CD8-positive, alpha-beta T cell (primary cell): ENCODE measurements at regions of chr19 and their contacts with region 1.

Region 1: GRCh38 chr19:38736413-38737280 is 7.6 kb downstream of the CAPN12 start:
- DNase-seq: peak; percentile 27 to 78 (median 67)
- ATAC-seq: peak; percentile 27
- H3K4me3 ChIP-seq: peak overlapping the region; percentile 29 to 41
- H3K4me3 Mint-ChIP-seq: peak overlapping the region; percentile 66
- H3K27ac ChIP-seq: no peak overlapping the region
- H3K27ac Mint-ChIP-seq: no peak overlapping the region
- H3K4me1 ChIP-seq: peaks cover 45% of the 10 kb centered on the region
- H3K4me1 Mint-ChIP-seq: peaks cover 40% of the 10 kb centered on the region
- H3K27me3 ChIP-seq: no peaks in the 10 kb centered on the region
- H3K27me3 Mint-ChIP-seq: no peaks in the 10 kb centered on the region
- CTCF ChIP-seq: no peak

Region 2: GRCh38 chr19:38856813-38857212 is 120.2 kb after region 1 on chr19:
- CTCF ChIA-PET with region 1: no interaction called
- POLR2A ChIA-PET with region 1: no interaction called
- intact Hi-C with region 1: no loop called
- DNase-seq: no peak
- ATAC-seq: no peak
- H3K4me3 ChIP-seq: no peak overlapping the region
- H3K4me3 Mint-ChIP-seq: peak overlapping the region; percentile 56
- H3K27ac ChIP-seq: peak overlapping the region; percentile 21 to 66
- H3K27ac Mint-ChIP-seq: peak overlapping the region; percentile 72
- H3K4me1 ChIP-seq: peaks cover 22% of the 10 kb centered on the region
- H3K4me1 Mint-ChIP-seq: peaks cover 30% of the 10 kb centered on the region
- H3K27me3 ChIP-seq: no peaks in the 10 kb centered on the region
- H3K27me3 Mint-ChIP-seq: no peaks in the 10 kb centered on the region
- CTCF ChIP-seq: no peak

Region 3: DNA sequence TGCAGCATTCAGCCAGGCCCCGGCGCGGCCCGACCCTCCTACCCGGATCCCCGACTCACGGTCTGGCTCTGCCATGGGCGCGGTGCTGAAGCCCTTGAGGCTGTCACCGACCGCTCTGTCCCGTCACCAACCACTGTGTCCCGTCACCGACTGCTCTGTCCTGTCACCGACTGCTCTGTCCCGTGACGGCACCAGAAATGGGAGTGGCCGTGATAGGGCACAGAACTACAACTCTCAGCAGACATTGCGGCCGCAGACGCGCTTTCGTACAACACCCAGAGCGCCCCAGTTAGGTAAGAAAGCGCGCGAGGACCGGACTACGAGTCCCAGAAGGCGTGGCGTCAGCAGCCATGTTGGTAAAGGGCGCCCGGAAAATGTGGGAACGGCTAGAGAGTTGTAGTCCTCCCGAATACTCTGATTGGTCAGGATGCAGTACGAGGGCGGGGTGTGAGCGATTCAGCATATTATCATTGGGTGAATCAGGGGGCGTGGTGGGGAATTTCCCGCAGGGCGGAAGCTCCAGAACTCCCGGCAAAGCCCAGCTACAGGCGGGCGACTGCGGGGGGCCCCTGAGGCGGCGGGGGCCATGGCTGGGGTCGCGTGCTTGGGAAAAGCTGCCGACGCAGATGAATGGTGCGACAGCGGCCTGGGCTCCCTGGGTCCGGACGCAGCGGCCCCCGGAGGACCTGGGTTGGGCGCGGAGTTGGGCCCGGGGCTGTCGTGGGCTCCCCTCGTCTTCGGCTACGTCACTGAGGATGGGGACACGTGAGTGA is 163.0 kb after region 1 on chr19 and contains the starts of genes NFKBIB and SIRT2:
- CTCF ChIA-PET with region 1: no interaction called
- POLR2A ChIA-PET with region 1: no interaction called
- intact Hi-C with region 1: loop called in 1 of 2 experiments (anchors 1 kb)
- DNase-seq: peak; percentile 97 to 100 (median 99)
- ATAC-seq: peak; percentile 85
- H3K4me3 ChIP-seq: peak within 1 kb of the TSS; percentile 68 to 88
- H3K4me3 Mint-ChIP-seq: peak within 1 kb of the TSS; percentile 93
- H3K27ac ChIP-seq: peak within 1 kb of the TSS; percentile 93 to 100
- H3K27ac Mint-ChIP-seq: peak within 1 kb of the TSS; percentile 98
- H3K4me1 ChIP-seq: peaks cover 23% of the 10 kb centered on the region
- H3K4me1 Mint-ChIP-seq: peaks cover 57% of the 10 kb centered on the region
- H3K27me3 ChIP-seq: no peaks in the 10 kb centered on the region
- H3K27me3 Mint-ChIP-seq: no peaks in the 10 kb centered on the region
- CTCF ChIP-seq: no peak
- total RNA-seq, gene NFKBIB: 62.9 to 66.1 TPM
- total RNA-seq, gene SIRT2: 90.6 to 95.1 TPM